HAP-1 (cell line): ENCODE measurements at regions of chr15 and their contacts with region 1.

Region 1: GRCh38 chr15:78750566-78750965 is 60.7 kb downstream of the ADAMTS7 start:
- DNase-seq: peak in 1 of 2 experiments; percentile 7
- H3K4me3 ChIP-seq: no peak overlapping the region
- H3K4me1 ChIP-seq: no peaks in the 10 kb centered on the region
- H3K27me3 ChIP-seq: no peaks in the 10 kb centered on the region

Region 2: GRCh38 chr15:77944002-77944867 is 806.3 kb before region 1 on chr15:
- in situ Hi-C with region 1: loop called (anchors 5 kb)
- DNase-seq: peak; percentile 77 to 91
- H3K4me3 ChIP-seq: peak overlapping the region; percentile 23
- H3K4me1 ChIP-seq: peaks cover 3% of the 10 kb centered on the region
- H3K27me3 ChIP-seq: no peaks in the 10 kb centered on the region; the same call in 1 of the 2 replicates

Region 3: DNA sequence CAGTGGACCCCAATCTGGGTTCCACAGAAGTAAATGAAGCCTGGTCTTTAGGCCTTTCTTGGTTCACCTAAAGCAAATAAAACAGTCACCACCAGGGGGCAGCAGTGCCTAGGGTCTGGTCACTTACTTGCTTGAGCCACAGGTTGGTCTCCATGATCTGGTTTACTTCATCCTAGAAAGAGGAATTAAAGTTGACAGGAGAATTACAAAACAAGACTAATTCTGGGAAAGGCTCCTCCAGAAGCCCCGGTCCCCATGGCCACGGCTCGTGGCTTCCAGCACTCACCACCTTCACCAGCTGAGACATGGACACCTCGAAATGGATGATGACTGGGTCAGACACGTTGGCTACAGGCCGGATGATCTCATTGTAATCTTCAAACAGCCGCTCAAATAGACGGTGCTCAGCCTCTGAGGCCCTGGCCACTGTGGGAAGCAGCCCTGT is 132.1 kb before region 1 on chr15:
- in situ Hi-C with region 1: loop called (anchors 5 kb)
- DNase-seq: peak; percentile 82 to 100
- H3K4me3 ChIP-seq: no peak overlapping the region
- H3K4me1 ChIP-seq: peaks cover 4% of the 10 kb centered on the region; the same call in 1 of the 2 replicates
- H3K27me3 ChIP-seq: peaks cover 38% of the 10 kb centered on the region

Region 4: GRCh38 chr15:78714890-78715289 is 35.7 kb before region 1 on chr15:
- in situ Hi-C with region 1: loop called (anchors 5 kb)
- DNase-seq: peak; percentile 74 to 88
- H3K4me3 ChIP-seq: no peak overlapping the region
- H3K4me1 ChIP-seq: peaks cover 3% of the 10 kb centered on the region
- H3K27me3 ChIP-seq: 0 out of 2 replicates have a peak, but pooled peaks cover 1% of the 10 kb centered on the region